GM18951 (cell line): ENCODE measurements at regions of chr1 and their contacts with region 1.

Region 1: DNA sequence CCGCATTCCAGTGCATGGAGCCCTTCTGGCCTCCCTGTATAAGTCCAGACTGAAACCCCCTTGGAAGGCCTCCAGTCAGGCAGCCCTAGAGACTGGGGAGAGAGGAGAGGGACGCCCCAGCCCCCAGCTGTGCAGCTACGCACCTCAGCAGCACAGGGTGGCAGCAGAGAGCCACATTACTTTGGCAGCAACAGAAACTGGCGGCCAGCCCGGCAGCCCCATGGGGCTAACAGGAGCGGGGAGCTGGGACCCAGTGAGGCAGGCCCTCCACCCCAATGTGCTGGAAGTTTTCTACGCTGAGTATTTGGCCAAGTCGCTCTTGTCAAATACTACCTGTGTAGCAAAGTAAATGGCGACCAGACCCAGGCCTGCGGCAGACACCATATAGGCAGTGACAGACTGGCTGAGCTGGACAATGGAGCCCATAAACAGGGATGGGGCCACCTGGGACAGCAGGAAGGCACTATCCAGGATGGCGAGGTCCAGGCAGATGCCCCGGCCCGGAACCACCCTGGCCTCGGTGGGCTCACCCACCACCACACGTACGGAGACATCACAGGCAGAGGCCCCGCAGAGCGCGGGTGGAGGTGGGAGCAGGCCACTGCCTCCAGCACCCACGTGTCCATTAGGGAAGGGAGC is 21.2 kb downstream of the SLC45A3 start:
- POLR2A ChIP-seq: no peak

Region 2: GRCh38 chr1:205536759-205537361 is 122.2 kb before region 1 on chr1:
- in situ Hi-C with region 1: loop called (anchors 10 kb)
- POLR2A ChIP-seq: no peak

Region 3: GRCh38 chr1:205591522-205592351 is 67.3 kb before region 1 on chr1:
- in situ Hi-C with region 1: loop called (anchors 5 kb)
- POLR2A ChIP-seq: no peak